ENCODE measurements at regions of chr5 and their contacts with region 1.

Region 1: DNA sequence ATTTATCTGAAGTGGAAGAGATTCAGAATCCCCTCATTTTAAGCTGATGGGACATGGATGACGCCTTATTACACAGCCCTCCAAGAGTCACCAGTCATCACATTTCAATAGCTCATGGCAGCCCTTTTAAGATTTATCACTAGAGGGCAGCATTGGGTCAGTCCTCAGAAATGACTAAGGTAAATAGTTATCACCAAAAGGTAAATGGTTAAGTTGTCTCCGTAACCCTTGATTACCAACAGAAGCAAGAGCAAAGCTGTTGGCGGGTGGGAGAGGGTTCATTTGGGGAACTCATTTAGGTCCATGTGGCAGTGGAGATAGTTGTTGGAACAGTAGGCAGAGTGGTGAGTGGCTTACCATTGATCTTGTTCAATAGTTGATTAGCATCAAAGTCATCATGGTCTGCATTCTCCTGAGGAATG is 12.0 kb upstream of the C9 start:
- DNase-seq: peak; percentile 43
- CTCF ChIP-seq: peak; percentile 55

Region 2: DNA sequence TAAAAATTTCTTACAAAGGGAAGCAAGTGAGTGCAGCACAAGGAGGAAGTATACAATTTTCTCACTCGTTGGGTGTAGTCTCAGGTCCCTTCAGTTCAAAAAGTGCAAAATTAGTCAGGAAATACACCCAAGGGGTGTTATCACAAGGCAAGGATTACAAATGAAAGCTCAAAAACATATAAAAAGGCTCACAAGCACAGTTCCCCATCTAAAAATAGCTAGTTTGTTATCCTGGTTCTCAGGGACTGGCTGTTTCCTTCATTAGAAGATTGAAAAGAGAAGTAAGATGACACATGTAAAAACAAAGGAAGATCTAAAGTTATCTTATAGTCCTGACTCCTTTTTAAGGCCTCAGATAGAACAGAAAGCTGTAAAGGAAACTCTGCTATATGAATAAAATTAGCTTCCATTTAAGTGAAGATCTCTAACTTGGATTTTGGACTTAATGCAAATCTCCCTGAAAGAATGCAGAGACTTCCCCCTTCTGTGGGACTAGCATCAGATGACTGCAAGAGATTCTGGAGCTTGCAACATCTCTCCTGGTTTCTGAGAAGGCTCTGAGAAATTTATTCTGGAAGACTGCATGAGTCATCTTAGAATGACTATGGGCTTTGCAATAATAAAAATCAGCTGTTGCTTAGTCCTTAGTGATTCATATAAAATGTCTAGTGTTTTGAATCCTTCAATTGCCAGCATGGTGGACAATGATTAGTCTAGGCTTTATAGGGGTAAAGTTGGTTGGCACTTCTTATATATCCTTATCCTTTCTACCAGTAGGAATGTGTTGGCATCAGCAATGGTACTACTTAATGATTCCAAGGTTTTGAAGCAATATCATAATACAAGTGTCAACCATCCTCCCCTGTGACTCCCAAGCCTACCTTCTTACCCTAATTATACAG is 23.1 kb after region 1 on chr5:
- CTCF ChIA-PET with region 1: interaction called, 34 read pairs
- POLR2A ChIA-PET with region 1: no interaction called
- DNase-seq: no peak
- CTCF ChIP-seq: no peak

Region 3: GRCh38 chr5:39526914-39527477 is 150.7 kb after region 1 on chr5:
- CTCF ChIA-PET with region 1: no interaction called
- POLR2A ChIA-PET with region 1: no interaction called
- DNase-seq: no peak
- CTCF ChIP-seq: no peak

Region 4: DNA sequence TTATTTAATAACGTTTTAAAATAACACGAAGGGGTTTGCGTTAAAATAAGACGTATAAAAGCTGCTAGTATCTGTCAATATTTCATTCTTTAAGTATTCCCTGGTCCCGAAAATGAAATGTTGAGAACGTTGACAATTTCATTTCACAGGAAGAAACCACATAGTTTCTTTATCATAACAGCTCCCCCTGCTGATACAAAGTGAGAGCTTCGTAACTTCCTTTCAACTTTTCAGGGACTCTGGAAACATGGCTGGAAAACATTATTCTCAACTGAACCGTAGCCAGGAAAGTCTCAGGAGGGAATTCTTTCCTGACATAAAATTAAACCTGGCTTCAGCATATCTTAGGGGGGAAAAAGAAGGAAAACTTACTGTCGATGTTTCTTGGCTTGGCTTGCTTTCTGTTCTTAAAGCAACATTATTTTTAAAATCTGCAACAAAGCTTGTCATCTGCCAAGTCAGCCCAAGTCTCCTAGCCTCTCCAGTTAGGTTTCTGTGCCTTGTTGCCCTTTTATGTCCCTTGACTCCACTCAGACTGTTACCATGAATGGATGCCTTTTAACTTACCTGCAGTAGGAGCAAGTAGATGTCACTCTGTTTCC is 171.3 kb after region 1 on chr5:
- CTCF ChIA-PET with region 1: interaction called, 39 read pairs
- POLR2A ChIA-PET with region 1: no interaction called
- DNase-seq: peak; percentile 19
- CTCF ChIP-seq: peak; percentile 54

Measured in GM10248 (cell line).